MCF 10A (cell line): ENCODE measurements at regions of chr11 and their contacts with region 1.

Region 1: DNA sequence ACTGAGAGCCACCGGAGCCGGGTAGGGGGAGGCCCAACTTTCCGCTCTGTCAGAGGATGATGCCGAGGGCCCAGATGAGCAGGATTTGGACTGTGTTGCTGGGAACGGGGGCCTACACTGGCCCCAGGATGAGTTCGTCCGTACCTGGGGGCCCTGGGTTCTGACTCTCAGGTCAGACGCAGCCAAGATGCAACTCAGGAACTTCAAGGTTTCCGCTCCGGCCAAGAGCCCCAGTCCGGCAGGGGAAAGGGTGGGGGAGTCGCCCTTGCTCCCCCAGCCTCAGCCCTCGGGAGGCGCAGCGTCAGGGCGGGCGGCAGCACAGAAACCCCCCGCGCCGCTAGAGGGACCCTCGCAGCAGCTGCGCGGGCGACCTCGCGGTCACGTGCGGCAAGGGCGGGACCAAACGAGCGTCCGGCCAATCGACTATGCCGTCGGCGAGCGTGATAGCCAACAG is 241 bp upstream of the ARL2 start:
- DNase-seq: peak; percentile 82
- H3K4me3 Mint-ChIP-seq: peak overlapping the region; percentile 83
- H3K27ac Mint-ChIP-seq: peak overlapping the region; percentile 63
- H3K4me1 Mint-ChIP-seq: peaks cover 16% of the 10 kb centered on the region
- H3K27me3 Mint-ChIP-seq: no peaks in the 10 kb centered on the region
- CTCF ChIP-seq: no peak

Region 2: GRCh38 chr11:64916775-64917662 is 96.7 kb before region 1 on chr11 and contains the start of gene ATG2A:
- CTCF ChIA-PET with region 1: interaction called, 6 read pairs
- POLR2A ChIA-PET with region 1: interaction called, 27 read pairs
- intact Hi-C with region 1: no loop called
- DNase-seq: peak; percentile 99
- H3K4me3 Mint-ChIP-seq: peak within 1 kb of the TSS; percentile 90
- H3K27ac Mint-ChIP-seq: peak within 1 kb of the TSS; percentile 98
- H3K4me1 Mint-ChIP-seq: peaks cover 6% of the 10 kb centered on the region
- H3K27me3 Mint-ChIP-seq: no peaks in the 10 kb centered on the region
- CTCF ChIP-seq: no peak
- total RNA-seq, gene ATG2A: 28.7 and 29.9 TPM in 2 replicates

Region 3: GRCh38 chr11:65027213-65028067 is 13.7 kb after region 1 on chr11 and contains the start of gene SNX15:
- CTCF ChIA-PET with region 1: interaction called, 64 read pairs
- POLR2A ChIA-PET with region 1: interaction called, 28 read pairs
- intact Hi-C with region 1: no loop called
- DNase-seq: peak; percentile 97
- H3K4me3 Mint-ChIP-seq: peak within 1 kb of the TSS; percentile 75
- H3K27ac Mint-ChIP-seq: peak within 1 kb of the TSS; percentile 30
- H3K4me1 Mint-ChIP-seq: peaks cover 7% of the 10 kb centered on the region
- H3K27me3 Mint-ChIP-seq: no peaks in the 10 kb centered on the region
- CTCF ChIP-seq: peak; percentile 71
- total RNA-seq, gene SNX15: 18.0 and 21.0 TPM in 2 replicates

Region 4: GRCh38 chr11:65078151-65078550 is 64.4 kb after region 1 on chr11:
- CTCF ChIA-PET with region 1: interaction called, 8 read pairs
- POLR2A ChIA-PET with region 1: interaction called, 4 read pairs
- intact Hi-C with region 1: loop called (anchors 5 kb)
- DNase-seq: peak; percentile 45
- H3K4me3 Mint-ChIP-seq: no peak overlapping the region
- H3K27ac Mint-ChIP-seq: peak overlapping the region; percentile 57
- H3K4me1 Mint-ChIP-seq: peaks cover 27% of the 10 kb centered on the region
- H3K27me3 Mint-ChIP-seq: no peaks in the 10 kb centered on the region
- CTCF ChIP-seq: peak; percentile 69

Region 5: DNA sequence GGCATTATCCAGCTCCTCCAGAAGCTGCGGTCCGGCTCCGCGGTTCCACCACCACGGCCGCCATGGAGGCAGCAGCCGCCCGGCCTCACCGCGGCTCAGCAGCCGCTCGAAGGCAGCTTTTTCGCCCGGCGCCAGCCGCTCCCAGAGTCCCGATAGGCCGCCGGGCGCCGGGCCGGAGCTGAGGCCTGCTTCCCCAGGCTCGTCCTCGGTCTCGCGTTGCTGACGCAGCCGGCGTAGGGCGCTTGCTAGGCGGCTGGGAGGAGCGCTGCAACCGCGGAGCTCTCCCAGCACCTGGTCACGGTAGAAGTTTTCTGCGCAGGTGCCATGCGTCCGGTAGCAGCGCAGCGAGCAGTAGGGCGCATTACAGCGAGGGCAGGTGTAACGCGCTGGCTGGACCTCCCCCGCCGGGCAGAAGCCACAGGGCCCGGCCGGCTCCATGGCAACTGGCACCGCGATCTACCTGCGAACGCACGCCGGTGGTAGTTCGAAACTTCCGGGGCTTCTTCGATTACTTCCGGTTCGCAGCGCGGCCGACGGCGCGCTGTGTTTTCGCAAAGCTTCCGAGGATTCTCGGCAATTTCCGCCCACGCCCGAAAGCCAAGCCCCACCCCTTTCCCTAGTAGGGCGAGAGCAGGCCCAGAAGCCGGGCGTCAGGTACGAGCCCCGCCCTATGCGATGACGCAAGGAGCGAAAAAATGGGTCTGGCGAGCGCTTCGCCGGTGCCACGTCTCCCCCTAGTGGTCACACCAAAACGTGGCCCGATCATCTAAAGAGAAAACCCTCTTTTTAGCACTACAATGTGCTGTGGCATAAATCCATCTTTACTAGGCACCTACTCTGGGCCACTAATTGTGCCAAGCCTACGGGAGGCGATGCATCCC is 103.7 kb after region 1 on chr11 and contains the start of gene ZNHIT2:
- CTCF ChIA-PET with region 1: interaction called, 4 read pairs
- POLR2A ChIA-PET with region 1: interaction called, 15 read pairs
- intact Hi-C with region 1: loop called (anchors 2 kb)
- DNase-seq: peak; percentile 99
- H3K4me3 Mint-ChIP-seq: peak within 1 kb of the TSS; percentile 82
- H3K27ac Mint-ChIP-seq: peak within 1 kb of the TSS; percentile 88
- H3K4me1 Mint-ChIP-seq: peaks cover 16% of the 10 kb centered on the region
- H3K27me3 Mint-ChIP-seq: no peaks in the 10 kb centered on the region
- CTCF ChIP-seq: peak; percentile 84
- total RNA-seq, gene ZNHIT2: 22.0 and 23.6 TPM in 2 replicates